ENCODE measurements at regions of chr18 and their contacts with region 1.

Region 1: GRCh38 chr18:12470382-12471075 is 62.8 kb downstream of the PRELID3A start:
- DNase-seq: no peak
- ATAC-seq: peak in 4 of 8 donors; percentile 41 to 70 (median 44)
- H3K4me3 ChIP-seq: no peak overlapping the region
- H3K27ac ChIP-seq: peak overlapping the region in 3 of 10 donors; percentile 0 to 48 (median 9)
- H3K4me1 ChIP-seq: peaks cover 0 to 13% (median 4%) of the 10 kb centered on the region in 9 donors
- H3K27me3 ChIP-seq: no peaks in the 10 kb centered on the region
- CTCF ChIP-seq: no peak

Region 2: DNA sequence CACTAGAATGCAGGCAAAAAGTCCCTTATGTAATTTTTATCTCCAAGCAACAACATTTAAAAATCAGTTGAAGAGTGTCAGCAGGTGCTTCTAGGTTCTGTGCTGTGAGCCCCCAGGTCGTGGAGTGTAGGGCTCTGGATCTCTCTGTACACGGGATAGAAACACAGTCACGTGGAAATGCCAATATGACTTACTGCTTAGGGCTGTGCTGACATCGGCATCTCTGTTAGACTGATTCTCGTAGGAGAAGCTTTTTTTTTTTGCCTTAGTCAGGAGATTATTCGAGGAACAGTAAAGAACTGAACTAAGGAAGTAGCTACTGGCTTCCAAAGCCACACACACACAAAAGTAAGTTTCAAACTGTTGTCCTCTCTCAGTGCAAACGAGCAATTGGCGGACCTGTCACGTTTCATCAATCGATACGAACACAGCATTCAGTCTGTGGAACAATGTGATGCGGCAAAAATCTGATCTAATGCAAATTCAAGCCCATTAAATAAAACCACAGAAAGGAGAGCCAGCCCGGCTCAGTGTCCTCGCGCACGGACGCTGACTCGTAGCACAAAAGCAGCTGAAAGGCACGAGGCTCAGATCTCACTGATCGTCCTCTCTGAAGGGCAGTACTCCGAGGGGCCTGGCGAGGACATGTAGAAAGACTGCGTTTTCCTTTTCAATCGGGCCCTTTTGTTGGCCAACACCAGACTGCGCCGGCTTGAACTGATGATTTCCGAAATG is 21.3 kb before region 1 on chr18:
- intact Hi-C with region 1: loop called in 1 of 10 experiments (anchors 2 kb)
- DNase-seq: no peak
- ATAC-seq: peak in 5 of 8 donors; percentile 34 to 55 (median 47)
- H3K4me3 ChIP-seq: no peak overlapping the region
- H3K27ac ChIP-seq: peak overlapping the region in 1 of 10 donors; percentile 50
- H3K4me1 ChIP-seq: no peaks in the 10 kb centered on the region
- H3K27me3 ChIP-seq: no peaks in the 10 kb centered on the region
- CTCF ChIP-seq: no peak

Measured in heart right ventricle (tissue), 16 donors.